GM13976 (cell line): ENCODE measurements at regions of chr14 and their contacts with region 1.

Region 1: DNA sequence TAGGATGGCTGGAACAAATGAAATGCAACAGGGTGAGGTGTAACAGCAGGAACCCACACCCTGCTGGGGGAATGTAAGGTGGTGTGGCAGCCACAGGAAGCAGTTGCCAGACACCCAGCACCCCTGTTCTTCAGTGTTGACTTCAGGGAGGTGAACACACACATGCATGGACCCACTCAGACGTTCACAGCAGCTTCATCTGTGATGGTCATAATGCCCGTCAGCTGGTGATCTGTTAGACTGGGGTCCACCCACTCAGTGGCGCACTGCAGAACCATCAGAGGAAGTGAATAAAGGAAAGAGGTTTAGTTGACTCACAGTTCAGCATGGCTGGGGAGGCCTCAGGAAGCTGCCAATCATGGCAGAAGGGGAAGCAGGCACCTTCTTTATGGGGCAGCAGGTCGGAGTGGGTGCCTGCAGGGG is 22.7 kb upstream of the TEX22 start:
- DNase-seq: no peak
- CTCF ChIP-seq: no peak

Region 2: GRCh38 chr14:105168979-105169507 is 206.6 kb before region 1 on chr14:
- in situ Hi-C with region 1: no loop called
- DNase-seq: peak; percentile 71
- CTCF ChIP-seq: peak; percentile 40

Region 3: DNA sequence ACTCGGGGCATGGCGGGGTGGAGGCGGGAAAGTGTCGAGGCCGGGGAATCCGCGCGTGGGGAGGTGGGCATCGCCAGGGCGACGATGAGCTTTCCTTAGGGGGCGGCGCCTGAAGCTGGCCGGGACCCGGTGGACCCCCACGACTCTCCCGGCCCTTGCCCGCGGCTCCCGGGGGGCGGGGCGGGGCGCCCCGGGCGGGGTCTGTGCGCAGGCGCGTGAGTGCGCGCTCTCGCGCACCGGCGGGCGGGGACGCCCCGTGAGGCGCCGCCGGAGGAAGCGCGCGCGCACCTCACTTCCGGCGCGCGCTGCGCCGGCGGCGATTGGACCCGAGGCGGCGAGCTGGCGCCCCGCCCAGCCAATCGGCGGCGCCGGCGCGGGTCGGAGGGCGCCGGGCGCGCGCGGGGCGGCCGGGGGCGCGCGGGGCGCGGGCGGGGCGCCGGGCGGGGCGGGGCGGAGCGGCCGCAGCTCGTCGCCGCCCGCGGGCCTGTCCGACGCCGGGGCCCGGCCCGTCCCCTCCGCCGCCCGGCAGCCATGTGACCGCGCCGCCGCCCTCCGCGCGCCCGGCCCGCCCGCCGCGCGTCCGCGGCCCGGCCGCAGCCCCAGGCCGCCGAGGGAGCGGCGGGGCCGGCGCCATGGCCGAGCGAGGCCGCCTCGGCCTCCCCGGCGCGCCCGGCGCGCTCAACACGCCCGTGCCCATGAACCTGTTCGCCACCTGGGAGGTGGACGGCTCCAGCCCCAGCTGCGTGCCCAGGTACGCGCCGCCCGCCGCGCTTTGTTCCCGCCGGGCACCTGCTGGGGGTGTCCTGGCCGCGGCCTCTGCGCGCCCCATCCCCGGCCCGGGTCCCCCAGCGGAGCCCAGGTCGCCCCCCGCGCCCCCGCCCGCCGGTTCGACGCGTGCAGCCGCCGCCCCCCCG is 61.1 kb before region 1 on chr14 and contains the start of gene PACS2:
- in situ Hi-C with region 1: no loop called
- DNase-seq: peak; percentile 99
- CTCF ChIP-seq: no peak

Region 4: GRCh38 chr14:105456736-105457617 is 81.3 kb after region 1 on chr14:
- in situ Hi-C with region 1: no loop called
- DNase-seq: no peak
- CTCF ChIP-seq: no peak

Region 5: GRCh38 chr14:105470804-105471610 is 95.4 kb after region 1 on chr14:
- in situ Hi-C with region 1: no loop called
- DNase-seq: no peak
- CTCF ChIP-seq: no peak

Region 6: DNA sequence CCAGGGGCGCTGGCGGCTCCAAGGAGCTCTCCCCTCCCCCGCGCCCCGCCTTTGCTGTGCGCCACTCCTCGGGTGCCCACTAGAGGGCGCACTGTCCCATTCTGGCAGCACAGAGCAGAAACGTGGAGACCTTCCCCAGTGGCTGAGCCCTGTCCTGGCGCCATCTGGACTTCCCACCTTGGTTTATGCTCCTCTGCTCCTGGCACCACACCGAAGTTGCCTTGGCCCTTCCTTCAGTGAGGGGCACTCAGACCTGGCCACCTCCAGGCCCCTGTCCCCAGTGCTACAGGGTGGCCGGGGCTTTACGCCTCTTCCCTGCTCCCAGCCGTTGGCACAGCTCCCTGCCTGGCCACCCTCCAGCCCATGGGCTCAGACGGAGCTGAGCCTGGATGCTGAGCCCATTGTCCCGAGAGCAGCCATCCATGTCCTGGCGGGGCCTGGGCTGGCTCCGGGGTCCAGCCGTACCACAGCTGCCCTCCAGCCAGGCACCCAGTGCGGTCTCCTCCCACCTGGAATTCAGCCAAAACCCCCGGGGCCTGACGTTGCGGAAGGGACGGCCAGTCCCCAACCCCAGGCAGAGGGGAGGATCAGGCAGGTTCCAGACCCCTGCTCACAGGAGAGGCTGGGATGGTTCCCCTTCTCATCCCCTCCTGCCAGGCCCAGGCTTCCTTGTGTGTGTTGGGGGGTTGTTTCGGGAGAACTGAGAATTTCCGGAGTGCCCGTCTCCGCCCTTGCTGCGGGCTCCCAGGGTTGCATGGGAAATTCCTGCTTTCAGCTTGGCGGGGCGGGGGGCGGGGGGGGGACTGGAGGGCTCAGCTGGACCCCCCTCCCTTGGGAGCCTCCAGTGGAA is 105.5 kb after region 1 on chr14:
- in situ Hi-C with region 1: loop called (anchors 10 kb)
- DNase-seq: peak; percentile 94
- CTCF ChIP-seq: peak; percentile 100

Region 7: DNA sequence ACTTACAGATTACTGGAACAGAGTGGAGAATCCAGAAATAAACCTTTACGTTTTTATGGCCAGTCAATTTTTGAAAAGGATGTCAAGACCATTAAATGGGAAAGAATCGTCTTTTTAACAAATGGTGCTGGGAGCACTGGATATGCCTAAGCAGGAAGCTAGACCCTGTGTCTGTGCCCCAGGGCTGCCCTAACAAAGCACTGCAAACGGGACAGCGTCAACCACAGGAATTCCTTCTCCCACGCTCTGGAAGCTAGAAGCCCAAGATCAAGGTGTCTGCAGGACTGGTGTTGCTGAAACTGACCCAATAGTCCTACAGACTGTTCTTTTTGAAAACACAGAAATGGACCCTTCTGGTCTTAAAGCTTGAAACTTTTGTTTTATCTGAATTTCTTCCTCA is 141.4 kb after region 1 on chr14:
- in situ Hi-C with region 1: loop called (anchors 10 kb)
- DNase-seq: no peak
- CTCF ChIP-seq: no peak